Motor neuron (in vitro differentiated cells): ENCODE measurements at regions of chr19 and their contacts with region 1.

Region 1: DNA sequence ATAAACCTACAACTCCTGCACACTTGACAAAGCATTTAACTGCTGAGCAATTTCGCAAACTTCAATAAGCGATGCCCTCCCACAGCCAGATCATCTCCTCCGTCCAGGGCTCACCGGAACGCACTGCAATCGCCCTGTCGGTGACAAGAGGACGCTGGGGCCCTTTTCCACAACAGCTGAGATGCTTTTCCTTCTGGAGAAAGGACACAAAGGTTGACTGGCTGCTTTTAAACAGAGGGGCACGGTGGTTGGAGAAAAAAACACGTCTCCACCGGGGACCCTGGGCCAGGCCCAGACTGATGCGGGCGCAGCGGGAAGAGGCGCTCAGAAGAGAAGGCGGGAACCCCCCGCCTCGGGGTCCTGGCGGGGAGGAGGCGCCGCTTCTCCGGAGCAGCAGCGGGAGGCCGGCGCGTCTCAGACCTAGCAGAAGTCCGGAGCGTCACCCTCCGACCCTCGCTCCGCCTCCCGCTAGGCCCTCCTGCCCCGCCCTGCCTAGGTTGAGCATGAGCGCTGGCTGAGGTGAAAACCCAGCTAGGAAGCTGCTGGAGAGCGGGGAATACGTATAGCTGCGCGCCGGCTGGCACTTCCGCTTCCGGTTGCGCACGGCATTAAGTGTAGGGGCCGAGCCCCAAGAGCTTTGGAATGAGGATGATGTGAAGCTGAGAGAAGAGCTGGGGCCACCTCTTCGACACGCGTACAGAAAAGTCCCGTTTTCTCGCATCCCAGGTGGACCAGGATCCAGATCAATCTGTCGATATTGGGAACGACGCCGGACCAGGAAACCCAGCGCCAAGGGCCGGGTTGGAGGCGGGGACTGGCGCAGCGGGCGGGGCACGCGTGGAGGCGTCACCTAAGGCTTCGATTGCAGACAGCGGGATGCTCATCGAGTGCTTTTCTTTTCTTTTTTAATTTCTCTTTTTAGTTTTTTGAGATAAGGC is at the start of gene ZNF846:
- ATAC-seq: peak; percentile 98 to 99 (median 98)
- H3K4me3 ChIP-seq: peak within 1 kb of the TSS; percentile 62 to 90 (median 71)
- H3K27ac ChIP-seq: peak within 1 kb of the TSS; percentile 96
- H3K4me1 ChIP-seq: peaks cover 10 to 16% of the 10 kb centered on the region in 2 donors
- total RNA-seq, gene ZNF846: 5.1 to 15.0 (median 7.6) TPM

Region 2: DNA sequence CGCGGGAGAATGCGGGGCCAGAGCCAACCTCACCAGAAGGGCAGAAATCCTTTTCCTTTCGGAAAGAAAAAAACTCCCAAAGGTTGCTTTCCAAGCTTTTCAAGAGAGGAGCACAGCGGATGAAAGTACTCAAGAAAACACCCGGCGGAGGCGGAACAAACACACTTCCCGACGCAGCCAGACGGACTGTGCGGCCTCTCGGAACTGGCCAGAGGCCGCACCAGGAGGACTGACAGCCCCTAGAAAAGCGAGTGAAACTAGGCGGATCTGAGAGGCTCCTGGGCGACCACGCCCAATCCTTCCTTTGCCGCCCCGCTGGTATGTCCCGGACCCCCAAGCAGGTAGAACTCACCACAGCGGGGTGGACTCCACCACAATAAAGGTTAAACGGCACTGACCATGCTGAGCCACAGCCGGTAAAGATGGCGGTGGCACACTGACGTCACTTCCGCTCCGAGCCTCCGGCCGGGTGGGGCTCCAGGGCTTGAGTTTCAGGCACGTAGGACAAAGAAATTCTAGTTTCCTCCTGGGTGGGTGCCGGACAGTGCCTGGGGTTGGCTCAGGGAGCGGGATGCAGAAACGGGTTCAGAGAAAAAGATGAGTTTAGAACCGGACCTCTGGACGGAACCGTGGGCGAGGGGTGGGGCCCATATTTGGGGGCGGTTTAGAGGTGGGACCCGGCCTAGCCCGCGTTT is 93.6 kb before region 1 on chr19 and contains the start of gene ZNF562:
- in situ Hi-C with region 1: loop called in 1 of 9 experiments (anchors 25 kb)
- ATAC-seq: peak; percentile 94 to 98 (median 97)
- H3K4me3 ChIP-seq: peak within 1 kb of the TSS; percentile 52 to 90 (median 82)
- H3K27ac ChIP-seq: peak within 1 kb of the TSS; percentile 97 to 98
- H3K4me1 ChIP-seq: peaks cover 4 to 10% of the 10 kb centered on the region in 2 donors
- total RNA-seq, gene ZNF562: 20.6 to 39.4 (median 28.1) TPM

Region 3: GRCh38 chr19:10052602-10053360 is 284.3 kb after region 1 on chr19:
- in situ Hi-C with region 1: no loop called
- ATAC-seq: no peak
- H3K4me3 ChIP-seq: no peak overlapping the region
- H3K27ac ChIP-seq: no peak overlapping the region
- H3K4me1 ChIP-seq: no peaks in the 10 kb centered on the region